Sigmoid colon (tissue), 7 donors: ENCODE measurements at regions of chr1 and their contacts with region 1.

Region 1: DNA sequence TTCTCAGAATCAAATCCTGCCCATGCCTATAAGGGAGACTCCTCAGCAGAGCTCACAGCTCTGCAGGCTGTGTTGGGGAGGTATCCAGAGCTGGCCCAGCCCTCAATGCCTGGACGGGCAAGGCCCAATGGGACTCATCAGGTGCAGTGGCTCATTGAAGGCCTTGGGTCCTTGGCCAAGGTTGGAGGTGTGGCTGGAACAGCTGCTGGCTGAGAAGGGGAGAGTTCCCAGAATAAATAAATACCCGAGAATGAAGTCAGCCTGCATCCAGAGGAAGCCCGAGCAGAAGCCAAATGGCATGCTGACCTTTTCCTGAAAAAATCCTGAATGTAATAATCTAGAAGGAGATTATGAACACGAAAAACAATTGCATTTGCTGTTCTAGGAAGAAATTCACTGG is 25.2 kb upstream of the IKBKE start:
- DNase-seq: no peak
- H3K4me3 ChIP-seq: no peak overlapping the region
- H3K27ac ChIP-seq: peak overlapping the region in 1 of 4 donors; percentile 35
- H3K4me1 ChIP-seq: peaks cover 0 to 11% (median 9%) of the 10 kb centered on the region in 4 donors
- H3K27me3 ChIP-seq: no peaks in the 10 kb centered on the region
- CTCF ChIP-seq: no peak
- EP300 ChIP-seq: no peak
- POLR2A ChIP-seq: no peak

Region 2: DNA sequence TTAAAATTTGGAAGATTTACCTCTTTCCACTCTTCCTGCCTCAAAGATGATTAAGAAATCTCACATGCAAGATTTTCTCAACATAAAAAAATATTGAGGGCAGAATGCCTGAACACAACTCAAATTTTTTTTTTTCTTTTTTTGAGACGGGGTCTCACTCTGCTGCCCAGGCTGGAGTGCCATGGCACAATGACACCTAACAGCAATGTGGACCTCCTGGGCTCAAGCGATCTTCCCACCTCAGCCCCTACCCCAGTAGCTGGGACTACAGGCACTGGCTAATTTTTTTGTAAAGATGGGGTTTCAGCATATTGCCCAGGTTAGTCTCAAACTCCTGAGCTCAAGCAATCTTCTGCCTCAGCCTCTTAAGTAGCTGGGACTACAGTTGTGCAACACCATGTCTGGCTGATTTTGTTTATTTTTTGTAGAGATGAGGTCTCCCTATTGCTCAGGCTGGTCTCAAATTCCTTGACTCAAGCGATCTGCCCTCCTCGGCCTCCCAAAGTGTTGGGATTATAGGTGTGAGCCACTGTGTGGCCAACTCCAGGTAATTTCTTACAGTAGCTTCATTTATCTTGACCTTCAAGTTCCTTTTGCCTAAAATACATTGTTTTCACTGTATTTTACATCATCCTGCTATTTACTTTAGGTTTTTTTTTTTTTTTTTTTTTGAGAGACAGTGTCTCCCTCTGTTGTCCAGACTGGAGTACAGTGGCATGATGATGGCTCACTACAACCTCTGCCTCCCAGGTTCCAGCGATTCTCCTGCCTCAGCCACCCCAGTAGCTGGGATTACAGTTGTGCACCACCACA is 705.6 kb before region 1 on chr1:
- intact Hi-C with region 1: loop called (anchors 10 kb)
- DNase-seq: no peak
- H3K4me3 ChIP-seq: no peak overlapping the region
- H3K27ac ChIP-seq: no peak overlapping the region
- H3K4me1 ChIP-seq: peaks cover 0 to 60% (median 28%) of the 10 kb centered on the region in 4 donors
- H3K27me3 ChIP-seq: no peaks in the 10 kb centered on the region
- CTCF ChIP-seq: no peak
- EP300 ChIP-seq: no peak
- POLR2A ChIP-seq: no peak

Region 3: GRCh38 chr1:206059355-206059915 is 385.7 kb before region 1 on chr1:
- intact Hi-C with region 1: no loop called
- DNase-seq: no peak
- H3K4me3 ChIP-seq: no peak overlapping the region
- H3K27ac ChIP-seq: no peak overlapping the region
- H3K4me1 ChIP-seq: no peaks in the 10 kb centered on the region
- H3K27me3 ChIP-seq: no peaks in the 10 kb centered on the region
- CTCF ChIP-seq: no peak
- EP300 ChIP-seq: no peak
- POLR2A ChIP-seq: no peak

Region 4: DNA sequence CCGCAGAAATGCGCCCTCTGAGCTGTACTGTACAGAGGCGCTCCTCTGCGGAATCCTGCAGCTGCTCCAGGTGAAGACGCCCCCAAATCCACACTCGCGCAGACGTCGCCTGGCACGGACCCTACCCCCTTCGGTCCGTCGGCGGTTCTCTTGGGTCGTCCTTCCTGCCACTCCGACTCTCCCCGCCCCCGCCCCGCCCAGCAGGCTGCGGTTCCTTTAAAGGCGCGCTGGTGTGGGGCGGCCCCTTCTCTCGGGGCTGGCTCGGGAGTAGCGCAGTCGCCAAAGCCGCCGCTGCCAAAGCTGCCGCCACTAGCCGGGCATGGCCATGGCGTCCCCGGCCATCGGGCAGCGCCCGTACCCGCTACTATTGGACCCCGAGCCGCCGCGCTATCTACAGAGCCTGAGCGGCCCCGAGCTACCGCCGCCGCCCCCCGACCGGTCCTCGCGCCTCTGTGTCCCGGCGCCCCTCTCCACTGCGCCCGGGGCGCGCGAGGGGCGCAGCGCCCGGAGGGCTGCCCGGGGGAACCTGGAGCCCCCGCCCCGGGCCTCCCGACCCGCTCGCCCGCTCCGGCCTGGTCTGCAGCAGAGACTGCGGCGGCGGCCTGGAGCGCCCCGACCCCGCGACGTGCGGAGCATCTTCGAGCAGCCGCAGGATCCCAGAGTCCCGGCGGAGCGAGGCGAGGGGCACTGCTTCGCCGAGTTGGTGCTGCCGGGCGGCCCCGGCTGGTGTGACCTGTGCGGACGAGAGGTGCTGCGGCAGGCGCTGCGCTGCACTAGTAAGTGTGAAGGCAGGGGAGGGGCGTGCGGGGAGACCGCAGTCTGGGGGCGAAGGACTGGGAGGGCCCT is 62.4 kb after region 1 on chr1 and contains the start of gene RASSF5:
- intact Hi-C with region 1: no loop called
- DNase-seq: peak; percentile 90
- H3K4me3 ChIP-seq: peak within 1 kb of the TSS; percentile 31 to 72 (median 63)
- H3K27ac ChIP-seq: peak within 1 kb of the TSS in 3 of 4 donors; percentile 47 to 64 (median 55)
- H3K4me1 ChIP-seq: peaks cover 0 to 37% (median 22%) of the 10 kb centered on the region in 4 donors
- H3K27me3 ChIP-seq: peaks cover 8 to 19% (median 10%) of the 10 kb centered on the region in 3 donors
- CTCF ChIP-seq: no peak
- EP300 ChIP-seq: no peak
- POLR2A ChIP-seq: no peak
- total RNA-seq, gene RASSF5: 3.6 to 6.9 (median 4.8) TPM

Region 5: GRCh38 chr1:206663832-206664652 is 218.9 kb after region 1 on chr1:
- intact Hi-C with region 1: no loop called
- DNase-seq: peak; percentile 77
- H3K4me3 ChIP-seq: peak overlapping the region in 3 of 4 donors; percentile 19 to 34 (median 21)
- H3K27ac ChIP-seq: peak overlapping the region in 1 of 4 donors; percentile 26
- H3K4me1 ChIP-seq: peaks cover 0 to 15% (median 11%) of the 10 kb centered on the region in 4 donors
- H3K27me3 ChIP-seq: peaks cover 0 to 5% (median 0%) of the 10 kb centered on the region in 3 donors
- CTCF ChIP-seq: peak; percentile 83 to 91 (median 88)
- EP300 ChIP-seq: no peak
- POLR2A ChIP-seq: no peak